GM10248 (cell line): ENCODE measurements at regions of chr17 and their contacts with region 1.

Region 1: DNA sequence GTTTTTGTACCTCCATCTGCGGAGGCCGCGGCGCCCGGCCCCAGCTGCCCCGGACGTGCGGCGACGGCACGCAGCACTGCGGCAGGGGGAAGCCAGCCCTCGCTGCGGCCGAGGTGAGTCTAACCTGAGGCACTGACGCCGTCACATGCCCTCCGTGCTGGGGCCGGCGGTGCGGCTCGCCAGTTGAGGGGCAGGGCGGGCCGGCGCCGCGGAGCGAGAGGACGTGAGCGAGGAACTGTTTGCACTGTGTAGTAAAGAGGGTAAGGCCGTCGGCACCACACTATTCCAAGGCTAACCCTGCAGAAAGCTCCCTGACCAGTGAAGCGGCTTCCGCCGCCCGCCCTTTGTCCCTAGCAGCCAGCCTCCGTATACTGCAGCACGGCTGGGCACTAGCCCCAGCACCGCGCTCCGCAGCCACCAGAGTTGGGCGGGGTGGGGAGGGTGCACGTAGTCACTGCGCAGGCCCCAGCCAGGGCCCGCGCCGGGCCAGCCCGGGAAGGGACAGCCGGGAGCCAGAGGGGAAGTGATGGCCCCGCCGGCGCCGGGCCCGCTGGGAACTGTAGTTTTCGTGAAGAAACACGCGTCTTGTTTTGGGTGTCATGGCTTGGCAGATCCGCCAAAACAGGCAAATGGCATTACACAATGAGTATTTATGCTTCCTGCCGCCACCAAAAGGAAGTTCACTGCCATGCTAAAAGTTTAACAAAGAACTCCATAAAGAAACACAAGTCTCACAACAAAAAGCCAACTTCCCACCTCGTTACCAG is 580 bp upstream of the KANSL1 start:
- DNase-seq: peak; percentile 94
- CTCF ChIP-seq: no peak

Region 2: DNA sequence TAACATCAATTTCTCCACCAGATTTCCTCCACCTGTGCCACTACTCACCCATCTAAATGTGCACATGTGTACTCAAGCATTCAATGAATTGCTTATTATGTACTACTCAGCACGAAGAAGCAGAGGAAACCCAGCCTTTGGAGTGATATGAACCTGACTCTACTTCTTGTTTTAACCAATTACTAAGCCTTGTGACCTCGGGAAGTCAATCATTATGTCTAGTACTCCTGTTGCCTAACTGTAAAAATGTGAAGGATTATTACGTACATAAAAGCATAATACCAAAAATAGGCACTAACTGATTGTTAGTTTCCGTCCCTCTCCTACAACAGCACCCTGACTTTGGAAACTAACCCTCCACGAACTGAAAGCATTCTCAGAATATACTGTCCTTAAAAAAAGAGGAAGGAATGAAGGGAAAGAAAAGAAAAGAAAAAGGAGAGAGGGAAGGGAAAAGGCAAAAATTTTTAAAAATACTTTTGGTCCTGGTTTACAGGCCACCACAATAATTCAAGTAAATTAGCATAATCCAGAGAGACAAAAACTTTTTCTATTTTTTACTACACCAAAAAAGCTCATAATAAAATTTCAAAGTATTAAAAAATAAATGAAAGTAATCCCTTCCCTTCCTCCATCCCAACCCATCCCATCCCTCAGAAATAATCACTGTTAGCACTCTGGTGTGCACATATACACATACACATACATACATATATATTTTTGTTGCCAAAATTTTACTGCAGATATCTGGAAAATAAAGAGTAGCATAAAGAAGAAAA is 54.2 kb before region 1 on chr17:
- CTCF ChIA-PET with region 1: interaction called, 11 read pairs
- POLR2A ChIA-PET with region 1: no interaction called
- DNase-seq: no peak
- CTCF ChIP-seq: no peak

Region 3: DNA sequence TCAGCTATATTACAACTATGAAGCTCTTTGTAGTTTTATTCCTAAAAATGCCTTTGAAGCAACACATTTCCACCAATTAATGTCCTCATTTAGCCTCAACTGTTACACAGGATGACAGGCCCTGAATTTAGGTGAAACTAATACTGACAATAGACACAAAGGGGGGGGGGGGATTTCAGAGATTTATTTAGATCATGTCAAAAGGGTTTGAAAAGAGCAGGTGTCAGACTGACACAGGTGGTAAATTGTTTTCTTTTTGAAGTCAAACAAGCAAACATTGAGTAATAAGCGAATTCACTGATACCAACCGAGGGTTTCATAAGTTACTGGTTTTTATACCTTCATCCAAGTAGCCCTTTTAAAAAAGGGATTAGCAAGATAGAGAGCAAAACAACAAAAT is 41.4 kb before region 1 on chr17:
- CTCF ChIA-PET with region 1: interaction called, 11 read pairs
- POLR2A ChIA-PET with region 1: no interaction called
- DNase-seq: no peak
- CTCF ChIP-seq: no peak

Region 4: GRCh38 chr17:46179375-46179999 is 14.3 kb before region 1 on chr17:
- CTCF ChIA-PET with region 1: interaction called, 17 read pairs
- POLR2A ChIA-PET with region 1: interaction called, 4 read pairs
- DNase-seq: peak; percentile 56
- CTCF ChIP-seq: no peak

Region 5: GRCh38 chr17:46205975-46206374 is 12.2 kb after region 1 on chr17:
- CTCF ChIA-PET with region 1: interaction called, 41 read pairs
- POLR2A ChIA-PET with region 1: no interaction called
- DNase-seq: no peak
- CTCF ChIP-seq: no peak

Region 6: GRCh38 chr17:46212634-46213435 is 19.0 kb after region 1 on chr17:
- CTCF ChIA-PET with region 1: interaction called, 41 read pairs
- POLR2A ChIA-PET with region 1: interaction called, 3 read pairs
- DNase-seq: peak; percentile 73
- CTCF ChIP-seq: peak; percentile 49